ENCODE measurements at regions of chr21 and their contacts with region 1.

Region 1: GRCh38 chr21:38355992-38356797 is 99.4 kb downstream of the KCNJ15 start:
- DNase-seq: peak; percentile 77
- H3K4me3 Mint-ChIP-seq: no peak overlapping the region
- H3K27ac Mint-ChIP-seq: no peak overlapping the region
- H3K4me1 Mint-ChIP-seq: peaks cover 7% of the 10 kb centered on the region
- H3K27me3 Mint-ChIP-seq: no peaks in the 10 kb centered on the region
- CTCF ChIP-seq: peak; percentile 96

Region 2: GRCh38 chr21:37695111-37695510 is 661.1 kb before region 1 on chr21:
- CTCF ChIA-PET with region 1: interaction called, 16 read pairs
- POLR2A ChIA-PET with region 1: no interaction called
- intact Hi-C with region 1: loop called (anchors 1 kb)
- DNase-seq: no peak
- H3K4me3 Mint-ChIP-seq: no peak overlapping the region
- H3K27ac Mint-ChIP-seq: no peak overlapping the region
- H3K4me1 Mint-ChIP-seq: no peaks in the 10 kb centered on the region
- H3K27me3 Mint-ChIP-seq: peaks cover 25% of the 10 kb centered on the region
- CTCF ChIP-seq: no peak

Region 3: DNA sequence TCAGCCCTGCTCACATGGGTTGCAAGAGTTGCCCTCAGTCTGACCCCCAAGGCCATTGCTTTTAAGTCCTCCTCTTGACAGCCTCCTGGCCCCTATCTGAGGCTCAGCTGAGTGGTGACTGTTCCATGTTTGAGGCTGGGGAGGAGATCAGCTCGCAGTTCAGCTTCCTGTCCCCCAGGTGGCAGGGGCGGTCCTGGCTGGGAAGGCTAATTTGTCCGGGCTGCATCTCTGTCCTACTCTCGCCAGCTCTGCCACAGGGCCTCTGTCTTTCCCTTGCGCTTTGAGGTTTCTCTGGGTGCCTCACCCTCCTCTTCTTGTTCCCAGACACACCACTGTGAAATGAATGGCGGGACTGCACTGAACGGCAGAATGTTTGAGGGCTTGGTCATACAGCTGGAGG is 597.2 kb before region 1 on chr21:
- CTCF ChIA-PET with region 1: interaction called, 4 read pairs
- POLR2A ChIA-PET with region 1: no interaction called
- intact Hi-C with region 1: loop called (anchors 1 kb)
- DNase-seq: peak; percentile 54
- H3K4me3 Mint-ChIP-seq: no peak overlapping the region
- H3K27ac Mint-ChIP-seq: no peak overlapping the region
- H3K4me1 Mint-ChIP-seq: peaks cover 8% of the 10 kb centered on the region
- H3K27me3 Mint-ChIP-seq: peaks cover 21% of the 10 kb centered on the region
- CTCF ChIP-seq: peak; percentile 73

Region 4: DNA sequence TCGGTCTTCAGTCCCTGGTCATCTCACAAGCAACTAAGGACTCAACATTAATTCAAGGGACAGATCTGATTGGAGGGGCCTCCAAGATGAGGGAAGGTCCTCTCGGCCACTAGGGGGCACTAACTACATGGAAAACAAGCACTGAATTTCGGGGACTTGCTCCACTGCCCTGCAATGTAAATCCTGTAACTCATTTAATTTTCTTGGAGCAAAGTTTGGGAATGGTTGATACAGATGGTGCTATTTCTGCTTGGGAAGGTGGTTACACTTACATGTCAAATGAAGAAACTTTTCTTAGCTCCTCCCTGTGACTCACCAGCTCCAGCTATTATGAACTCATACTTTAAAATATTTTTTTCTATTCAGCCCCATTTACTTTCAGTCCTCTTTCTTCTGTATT is 196.8 kb before region 1 on chr21:
- CTCF ChIA-PET with region 1: interaction called, 8 read pairs
- POLR2A ChIA-PET with region 1: no interaction called
- intact Hi-C with region 1: loop called (anchors 1 kb)
- DNase-seq: peak; percentile 75
- H3K4me3 Mint-ChIP-seq: no peak overlapping the region
- H3K27ac Mint-ChIP-seq: no peak overlapping the region
- H3K4me1 Mint-ChIP-seq: peaks cover 9% of the 10 kb centered on the region
- H3K27me3 Mint-ChIP-seq: no peaks in the 10 kb centered on the region
- CTCF ChIP-seq: peak; percentile 79

Region 5: GRCh38 chr21:38219049-38219628 is 137.1 kb before region 1 on chr21:
- CTCF ChIA-PET with region 1: interaction called, 168 read pairs
- POLR2A ChIA-PET with region 1: interaction called, 14 read pairs
- intact Hi-C with region 1: loop called (anchors 1 kb)
- DNase-seq: peak; percentile 78
- H3K4me3 Mint-ChIP-seq: no peak overlapping the region
- H3K27ac Mint-ChIP-seq: no peak overlapping the region
- H3K4me1 Mint-ChIP-seq: peaks cover 7% of the 10 kb centered on the region
- H3K27me3 Mint-ChIP-seq: no peaks in the 10 kb centered on the region
- CTCF ChIP-seq: peak; percentile 94

Region 6: GRCh38 chr21:38343693-38344092 is 12.5 kb before region 1 on chr21:
- CTCF ChIA-PET with region 1: interaction called, 13 read pairs
- POLR2A ChIA-PET with region 1: interaction called, 3 read pairs
- intact Hi-C with region 1: no loop called
- DNase-seq: peak; percentile 87
- H3K4me3 Mint-ChIP-seq: peak overlapping the region; percentile 2
- H3K27ac Mint-ChIP-seq: peak overlapping the region; percentile 76
- H3K4me1 Mint-ChIP-seq: peaks cover 27% of the 10 kb centered on the region
- H3K27me3 Mint-ChIP-seq: no peaks in the 10 kb centered on the region
- CTCF ChIP-seq: no peak

Measured in MCF 10A (cell line).